ENCODE measurements at regions of chr11 and their contacts with region 1.

Region 1: GRCh38 chr11:110808248-110808647 is 96.0 kb upstream of the ARHGAP20 start:
- DNase-seq: no peak
- H3K4me3 ChIP-seq: no peak overlapping the region
- H3K27ac ChIP-seq: no peak overlapping the region
- H3K4me1 ChIP-seq: no peaks in the 10 kb centered on the region
- H3K27me3 ChIP-seq: peaks cover 4% of the 10 kb centered on the region
- CTCF ChIP-seq: no peak

Region 2: GRCh38 chr11:110759972-110760381 is 48.3 kb before region 1 on chr11:
- CTCF ChIA-PET with region 1: no interaction called
- dilution Hi-C with region 1: no loop called
- in situ Hi-C with region 1: no loop called
- intact Hi-C with region 1: no loop called
- DNase-seq: no peak
- H3K4me3 ChIP-seq: no peak overlapping the region
- H3K27ac ChIP-seq: no peak overlapping the region
- H3K4me1 ChIP-seq: no peaks in the 10 kb centered on the region
- H3K27me3 ChIP-seq: no peaks in the 10 kb centered on the region
- CTCF ChIP-seq: no peak

Region 3: GRCh38 chr11:110837603-110838002 is 29.4 kb after region 1 on chr11:
- CTCF ChIA-PET with region 1: no interaction called
- dilution Hi-C with region 1: loop called (anchors 5 kb)
- in situ Hi-C with region 1: no loop called
- intact Hi-C with region 1: no loop called
- DNase-seq: no peak
- H3K4me3 ChIP-seq: no peak overlapping the region
- H3K27ac ChIP-seq: no peak overlapping the region
- H3K4me1 ChIP-seq: no peaks in the 10 kb centered on the region
- H3K27me3 ChIP-seq: no peaks in the 10 kb centered on the region
- CTCF ChIP-seq: no peak

Region 4: GRCh38 chr11:110858547-110858921 is 50.3 kb after region 1 on chr11:
- CTCF ChIA-PET with region 1: no interaction called
- dilution Hi-C with region 1: no loop called
- in situ Hi-C with region 1: no loop called
- intact Hi-C with region 1: no loop called
- DNase-seq: no peak
- H3K4me3 ChIP-seq: no peak overlapping the region
- H3K27ac ChIP-seq: no peak overlapping the region
- H3K4me1 ChIP-seq: no peaks in the 10 kb centered on the region
- H3K27me3 ChIP-seq: peaks cover 9% of the 10 kb centered on the region
- CTCF ChIP-seq: no peak

Measured in mammary epithelial cell (primary cell).